Heart right ventricle (tissue), 16 donors: ENCODE measurements at regions of chr3 and their contacts with region 1.

Region 1: DNA sequence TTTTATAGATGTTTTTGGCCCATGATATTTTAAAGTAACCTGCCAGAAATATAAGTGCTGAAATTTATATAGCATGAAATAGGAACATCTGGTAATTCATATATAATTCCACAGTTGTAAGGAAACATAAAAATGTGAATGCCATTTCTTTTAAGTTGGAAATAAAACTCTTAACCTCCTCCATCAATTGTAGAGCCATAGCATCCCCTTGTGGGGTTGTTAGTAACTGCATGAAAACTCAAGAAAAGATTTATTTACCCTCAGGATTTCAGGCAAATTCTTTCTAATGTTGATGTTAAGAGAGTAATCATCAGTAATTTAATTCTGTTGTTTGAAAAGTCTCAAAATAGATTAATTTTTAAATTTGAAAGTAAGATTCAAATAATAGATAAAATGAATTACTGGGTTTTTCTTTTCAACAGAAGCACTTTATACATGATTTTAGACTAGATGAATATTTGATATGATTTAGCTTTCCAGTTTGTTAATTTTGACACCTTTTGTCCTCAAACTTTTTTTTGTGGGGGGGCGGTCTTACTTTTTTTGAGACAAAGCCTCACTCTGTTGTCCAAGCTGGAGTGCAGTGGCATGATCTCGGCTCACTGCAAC is 74.7 kb downstream of the RASA2 start:
- DNase-seq: peak in 1 of 2 donors; percentile 54
- ATAC-seq: peak in 1 of 8 donors; percentile 43
- H3K4me3 ChIP-seq: no peak overlapping the region
- H3K27ac ChIP-seq: no peak overlapping the region
- H3K4me1 ChIP-seq: peaks cover 0 to 13% (median 0%) of the 10 kb centered on the region in 9 donors
- H3K27me3 ChIP-seq: no peaks in the 10 kb centered on the region
- CTCF ChIP-seq: peak; percentile 84 to 99 (median 94)

Region 2: GRCh38 chr3:141303481-141304223 is 257.9 kb before region 1 on chr3:
- intact Hi-C with region 1: loop called in 4 of 10 experiments (anchors 2 to 10 kb)
- DNase-seq: peak in 1 of 2 donors; percentile 76
- ATAC-seq: peak; percentile 39 to 90 (median 71)
- H3K4me3 ChIP-seq: no peak overlapping the region
- H3K27ac ChIP-seq: peak overlapping the region in 3 of 10 donors; percentile 3 to 51 (median 38)
- H3K4me1 ChIP-seq: peaks cover 0 to 27% (median 10%) of the 10 kb centered on the region in 9 donors
- H3K27me3 ChIP-seq: no peaks in the 10 kb centered on the region
- CTCF ChIP-seq: peak; percentile 79 to 88 (median 82)

Region 3: DNA sequence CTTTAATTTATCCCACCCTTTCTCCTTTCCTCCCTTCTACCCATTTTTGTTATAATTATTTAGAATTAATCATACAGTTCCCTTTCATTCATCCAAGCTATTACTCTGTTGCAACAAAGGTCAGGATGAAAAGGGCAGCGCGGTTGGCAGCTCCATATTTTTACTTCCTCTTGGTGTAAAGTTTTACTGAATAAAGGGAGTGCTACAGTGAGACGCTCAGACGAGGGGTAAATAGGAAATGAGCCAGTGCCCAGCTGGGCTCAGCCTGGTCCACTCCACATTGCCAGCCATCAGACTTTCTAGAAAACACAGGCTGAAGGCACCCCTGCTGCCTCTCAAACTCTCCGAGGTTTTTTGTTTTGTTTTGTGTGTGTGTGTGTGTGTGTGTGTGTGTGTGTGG is 215.1 kb before region 1 on chr3:
- intact Hi-C with region 1: loop called in 2 of 10 experiments (anchors 10 kb)
- DNase-seq: no peak
- ATAC-seq: no peak
- H3K4me3 ChIP-seq: no peak overlapping the region
- H3K27ac ChIP-seq: no peak overlapping the region
- H3K4me1 ChIP-seq: no peaks in the 10 kb centered on the region
- H3K27me3 ChIP-seq: no peaks in the 10 kb centered on the region
- CTCF ChIP-seq: no peak

Region 4: DNA sequence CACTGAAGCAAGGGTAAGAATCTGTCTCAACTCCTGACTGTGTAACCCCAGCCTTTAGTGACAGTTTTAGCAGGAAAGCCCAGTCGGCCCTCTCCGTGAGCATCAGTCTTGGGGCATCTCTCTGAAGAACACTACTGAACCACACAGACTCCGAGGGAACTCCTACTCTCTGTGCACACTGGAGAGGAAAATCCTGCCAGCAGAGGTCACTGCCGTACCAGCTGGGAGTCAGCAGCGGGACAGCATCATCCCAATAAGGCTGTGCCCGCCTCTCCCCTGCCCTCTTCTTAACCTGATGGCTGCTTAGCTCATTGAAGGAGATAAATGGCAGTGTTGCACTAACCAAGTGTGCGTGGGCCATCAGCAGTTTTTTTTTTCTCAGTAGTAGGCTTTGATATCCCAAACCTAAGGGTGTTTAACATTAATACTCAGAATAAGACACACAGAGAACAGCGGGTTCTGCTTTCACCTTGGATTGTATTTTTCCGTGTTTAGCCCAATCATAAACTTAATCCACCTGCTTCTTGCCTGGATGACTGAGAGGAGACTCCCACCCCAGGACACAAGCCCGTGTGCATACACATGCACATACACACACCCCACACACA is 101.3 kb before region 1 on chr3:
- intact Hi-C with region 1: loop called in 9 of 10 experiments (anchors 1 to 5 kb)
- DNase-seq: peak; percentile 83 to 89
- ATAC-seq: peak; percentile 92 to 97 (median 96)
- H3K4me3 ChIP-seq: no peak overlapping the region
- H3K27ac ChIP-seq: no peak overlapping the region
- H3K4me1 ChIP-seq: peaks cover 0 to 12% (median 0%) of the 10 kb centered on the region in 9 donors
- H3K27me3 ChIP-seq: no peaks in the 10 kb centered on the region
- CTCF ChIP-seq: peak; percentile 77 to 95 (median 90)

Region 5: GRCh38 chr3:141477224-141477623 is 84.3 kb before region 1 on chr3:
- intact Hi-C with region 1: loop called in 3 of 10 experiments (anchors 5 kb)
- DNase-seq: no peak
- ATAC-seq: no peak
- H3K4me3 ChIP-seq: no peak overlapping the region
- H3K27ac ChIP-seq: no peak overlapping the region
- H3K4me1 ChIP-seq: peaks cover 0 to 28% (median 0%) of the 10 kb centered on the region in 9 donors
- H3K27me3 ChIP-seq: peaks cover 0 to 6% (median 0%) of the 10 kb centered on the region in 7 donors
- CTCF ChIP-seq: no peak

Region 6: GRCh38 chr3:141632779-141633374 is 71.3 kb after region 1 on chr3:
- intact Hi-C with region 1: no loop called
- DNase-seq: no peak
- ATAC-seq: no peak
- H3K4me3 ChIP-seq: no peak overlapping the region
- H3K27ac ChIP-seq: no peak overlapping the region
- H3K4me1 ChIP-seq: no peaks in the 10 kb centered on the region
- H3K27me3 ChIP-seq: peaks cover 0 to 3% (median 0%) of the 10 kb centered on the region in 7 donors
- CTCF ChIP-seq: no peak